AG04449 (cell line): ENCODE measurements at regions of chr15 and their contacts with region 1.

Region 1: GRCh38 chr15:71743861-71744382 is 66.4 kb upstream of the NR2E3 start:
- DNase-seq: no peak
- H3K4me3 ChIP-seq: no peak overlapping the region
- CTCF ChIP-seq: peak; percentile 48

Region 2: GRCh38 chr15:71575474-71576045 is 168.4 kb before region 1 on chr15:
- CTCF ChIA-PET with region 1: interaction called, 18 read pairs
- POLR2A ChIA-PET with region 1: no interaction called
- DNase-seq: no peak
- H3K4me3 ChIP-seq: no peak overlapping the region
- CTCF ChIP-seq: peak; percentile 38

Region 3: GRCh38 chr15:71666763-71667620 is 76.9 kb before region 1 on chr15:
- CTCF ChIA-PET with region 1: no interaction called
- POLR2A ChIA-PET with region 1: no interaction called
- DNase-seq: no peak
- H3K4me3 ChIP-seq: no peak overlapping the region
- CTCF ChIP-seq: no peak

Region 4: DNA sequence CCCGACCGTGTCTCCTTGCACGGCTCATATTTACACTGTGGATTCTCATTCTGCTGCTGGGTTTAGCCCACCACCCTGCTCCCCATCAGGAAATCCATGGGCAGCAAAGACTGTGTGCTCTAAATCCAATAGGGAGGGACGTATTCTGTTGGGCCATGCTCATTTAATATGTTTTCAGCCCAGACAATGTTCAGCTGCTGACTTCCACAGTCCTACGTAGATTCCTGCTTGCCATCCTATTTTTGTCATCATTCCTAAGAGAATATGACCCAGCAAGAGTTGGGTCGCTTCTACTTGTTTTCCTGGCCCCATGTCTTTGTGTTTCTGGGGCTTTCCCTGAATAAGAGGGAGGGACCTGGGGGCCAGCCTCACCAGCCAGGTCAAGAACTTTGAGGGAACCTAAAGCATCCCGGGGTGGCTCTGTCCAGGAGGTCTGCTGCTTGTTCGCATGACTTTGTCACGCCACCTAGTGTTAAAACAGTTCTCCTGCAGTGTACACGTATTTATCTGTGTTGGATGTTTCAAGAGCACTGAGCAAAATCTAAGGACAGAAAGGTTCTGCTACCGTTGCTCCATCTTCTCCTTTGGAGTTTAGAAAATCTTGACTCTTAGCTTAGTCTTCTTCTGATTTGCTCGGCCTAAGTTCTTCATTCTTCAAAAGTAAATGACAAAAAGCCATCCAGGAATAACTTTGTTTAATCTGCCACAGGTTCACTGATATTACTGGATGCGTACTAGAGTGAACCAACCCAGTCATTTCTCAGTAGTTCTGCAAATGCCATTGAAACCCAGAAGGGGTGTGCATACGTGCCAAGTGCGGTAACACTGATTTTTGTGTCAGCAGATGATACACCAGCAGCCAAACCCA is 13.4 kb before region 1 on chr15:
- CTCF ChIA-PET with region 1: interaction called, 111 read pairs
- POLR2A ChIA-PET with region 1: no interaction called
- DNase-seq: no peak
- H3K4me3 ChIP-seq: no peak overlapping the region
- CTCF ChIP-seq: peak; percentile 83

Region 5: DNA sequence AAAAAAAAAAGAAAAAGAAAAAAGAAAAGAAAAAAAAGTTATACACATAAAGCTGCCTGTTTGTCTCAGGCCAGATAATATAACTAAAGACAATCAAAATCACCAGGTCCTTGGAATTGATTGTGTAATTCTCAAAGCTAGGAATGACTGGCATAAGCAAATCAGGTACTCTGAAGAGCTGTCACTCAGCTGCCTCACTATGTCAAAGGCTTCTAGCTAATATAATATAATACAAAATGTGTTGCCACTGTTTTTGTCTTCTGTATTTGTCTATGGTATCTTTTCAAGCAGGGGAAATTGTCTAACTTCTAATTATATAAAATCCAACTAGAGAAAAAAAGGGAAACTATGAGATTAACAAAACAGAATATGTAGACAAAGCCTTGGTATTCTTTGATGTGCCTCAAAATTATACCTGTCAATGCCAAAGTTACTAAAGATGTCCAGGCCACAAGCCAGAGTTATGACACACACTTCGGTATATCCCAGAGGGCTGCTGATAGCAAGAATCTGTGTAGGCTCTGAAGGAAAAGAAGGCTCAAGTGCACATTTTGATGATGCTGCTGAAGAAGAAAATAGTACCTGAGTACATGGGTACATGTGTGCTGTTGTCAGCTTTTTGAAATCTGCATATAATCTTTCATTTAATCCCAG is 29.4 kb after region 1 on chr15:
- CTCF ChIA-PET with region 1: interaction called, 27 read pairs
- POLR2A ChIA-PET with region 1: no interaction called
- DNase-seq: no peak
- H3K4me3 ChIP-seq: no peak overlapping the region
- CTCF ChIP-seq: no peak

Region 6: GRCh38 chr15:71792521-71792920 is 48.6 kb after region 1 on chr15:
- CTCF ChIA-PET with region 1: interaction called, 11 read pairs
- POLR2A ChIA-PET with region 1: no interaction called
- DNase-seq: peak; percentile 52
- H3K4me3 ChIP-seq: no peak overlapping the region
- CTCF ChIP-seq: no peak

Region 7: GRCh38 chr15:72155635-72156616 is 412.0 kb after region 1 on chr15:
- CTCF ChIA-PET with region 1: interaction called, 52 read pairs
- POLR2A ChIA-PET with region 1: no interaction called
- DNase-seq: peak; percentile 29
- H3K4me3 ChIP-seq: peak overlapping the region; percentile 64
- CTCF ChIP-seq: peak; percentile 86